ENCODE measurements at regions of chr5 and their contacts with region 1.

Region 1: DNA sequence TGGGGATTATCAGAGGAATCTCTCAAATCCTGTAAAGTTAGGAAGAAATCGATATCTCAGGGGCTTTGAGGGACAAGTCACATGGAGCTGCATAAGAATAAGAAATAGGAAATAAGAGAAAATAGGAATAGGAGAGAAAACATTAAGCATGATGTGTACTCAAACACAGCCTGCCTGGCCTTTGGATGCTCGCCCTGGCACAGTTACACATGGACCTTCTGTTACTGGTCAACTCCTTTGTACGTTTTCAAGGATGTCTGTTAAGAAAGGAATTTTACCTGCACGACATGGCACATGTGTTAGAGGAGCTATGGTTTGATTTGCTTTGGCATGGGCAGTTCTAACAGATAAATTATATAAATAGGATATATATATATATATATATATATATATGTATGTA is 321.2 kb downstream of the CDH12 start:
- DNase-seq: no peak
- H3K4me3 Mint-ChIP-seq: no peak overlapping the region
- H3K27ac Mint-ChIP-seq: no peak overlapping the region
- H3K4me1 Mint-ChIP-seq: no peaks in the 10 kb centered on the region
- H3K27me3 Mint-ChIP-seq: no peaks in the 10 kb centered on the region
- CTCF ChIP-seq: no peak

Region 2: GRCh38 chr5:22521521-22521920 is 10.5 kb before region 1 on chr5:
- CTCF ChIA-PET with region 1: no interaction called
- POLR2A ChIA-PET with region 1: no interaction called
- intact Hi-C with region 1: loop called (anchors 1 kb)
- DNase-seq: no peak
- H3K4me3 Mint-ChIP-seq: no peak overlapping the region
- H3K27ac Mint-ChIP-seq: no peak overlapping the region
- H3K4me1 Mint-ChIP-seq: no peaks in the 10 kb centered on the region
- H3K27me3 Mint-ChIP-seq: no peaks in the 10 kb centered on the region
- CTCF ChIP-seq: no peak